Activated CD8-positive, alpha-beta memory T cell treated with anti-CD3 and anti-CD28 coated beads, Interleukin-2, amount 10 ng/mL, durations not matched to agents 7 days and 5 days (primary cell): ENCODE measurements at regions of chr18 and their contacts with region 1.

Region 1: GRCh38 chr18:2994603-2995432 is 18.1 kb downstream of the LPIN2 start:
- DNase-seq: peak; percentile 86
- ATAC-seq: peak; percentile 77
- H3K4me3 Mint-ChIP-seq: peak overlapping the region; percentile 9
- H3K27ac Mint-ChIP-seq: peak overlapping the region; percentile 79
- H3K4me1 Mint-ChIP-seq: peaks cover 78% of the 10 kb centered on the region
- H3K27me3 Mint-ChIP-seq: no peaks in the 10 kb centered on the region

Region 2: GRCh38 chr18:2948038-2948437 is 46.8 kb before region 1 on chr18:
- CTCF ChIA-PET with region 1: interaction called, 13 read pairs
- DNase-seq: no peak
- ATAC-seq: no peak
- H3K4me3 Mint-ChIP-seq: no peak overlapping the region
- H3K27ac Mint-ChIP-seq: no peak overlapping the region
- H3K4me1 Mint-ChIP-seq: peaks cover 42% of the 10 kb centered on the region
- H3K27me3 Mint-ChIP-seq: no peaks in the 10 kb centered on the region

Region 3: GRCh38 chr18:2971741-2972552 is 22.9 kb before region 1 on chr18:
- CTCF ChIA-PET with region 1: interaction called, 23 read pairs
- DNase-seq: peak; percentile 91
- ATAC-seq: peak; percentile 77
- H3K4me3 Mint-ChIP-seq: peak overlapping the region; percentile 77
- H3K27ac Mint-ChIP-seq: peak overlapping the region; percentile 98
- H3K4me1 Mint-ChIP-seq: peaks cover 92% of the 10 kb centered on the region
- H3K27me3 Mint-ChIP-seq: no peaks in the 10 kb centered on the region

Region 4: DNA sequence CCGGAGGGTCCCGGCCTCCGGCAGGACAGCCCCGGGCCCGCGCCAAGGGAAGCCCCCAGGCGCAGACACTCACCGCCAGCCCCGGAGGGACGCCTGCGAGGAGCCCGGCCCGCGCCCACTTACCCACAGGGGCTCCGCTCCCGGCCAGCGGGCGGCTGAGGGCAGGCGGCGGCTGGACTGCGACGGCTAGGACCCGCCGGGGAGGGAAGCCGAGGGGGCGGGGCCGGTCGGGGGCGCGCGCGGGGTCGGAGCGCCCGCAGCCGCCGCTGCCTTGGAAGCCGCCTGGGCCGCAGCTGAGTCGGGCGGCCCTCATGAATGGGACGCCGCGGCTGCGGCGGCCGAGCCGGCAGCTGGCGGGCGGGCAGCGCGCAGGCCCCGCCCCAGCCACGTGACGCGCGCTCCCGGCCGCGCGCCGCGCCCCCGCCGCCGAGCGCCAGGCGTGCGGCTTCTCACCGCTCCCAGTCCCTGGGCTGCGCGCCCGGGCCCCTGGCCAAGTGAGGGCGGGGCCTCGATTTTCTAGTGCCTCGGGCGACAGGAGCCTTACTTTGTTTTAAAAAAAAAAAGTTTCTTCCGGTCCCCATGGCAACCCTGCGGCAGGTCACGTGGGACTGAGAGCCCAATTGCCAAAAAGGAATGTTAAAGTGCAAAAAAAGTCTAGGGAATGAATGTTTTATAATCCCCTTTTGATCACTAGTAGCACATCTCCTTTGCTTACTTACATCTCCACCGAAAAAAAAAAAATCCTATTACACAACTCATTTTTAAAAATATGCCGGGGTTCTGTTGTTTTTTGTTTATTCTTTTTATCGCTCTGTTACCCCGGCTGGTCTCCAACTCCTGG is 18.4 kb after region 1 on chr18 and contains the start of gene LPIN2:
- CTCF ChIA-PET with region 1: interaction called, 12 read pairs
- DNase-seq: peak; percentile 98
- ATAC-seq: peak; percentile 94
- H3K4me3 Mint-ChIP-seq: peak within 1 kb of the TSS; percentile 88
- H3K27ac Mint-ChIP-seq: peak within 1 kb of the TSS; percentile 90
- H3K4me1 Mint-ChIP-seq: peaks cover 59% of the 10 kb centered on the region
- H3K27me3 Mint-ChIP-seq: no peaks in the 10 kb centered on the region
- total RNA-seq, gene LPIN2: 77.6 to 78.4 TPM

Region 5: GRCh38 chr18:3074087-3074486 is 79.3 kb after region 1 on chr18:
- CTCF ChIA-PET with region 1: interaction called, 10 read pairs
- DNase-seq: peak; percentile 37
- ATAC-seq: no peak
- H3K4me3 Mint-ChIP-seq: no peak overlapping the region
- H3K27ac Mint-ChIP-seq: no peak overlapping the region
- H3K4me1 Mint-ChIP-seq: peaks cover 19% of the 10 kb centered on the region
- H3K27me3 Mint-ChIP-seq: no peaks in the 10 kb centered on the region

Region 6: GRCh38 chr18:3151399-3152264 is 156.8 kb after region 1 on chr18:
- CTCF ChIA-PET with region 1: interaction called, 29 read pairs
- DNase-seq: no peak
- ATAC-seq: no peak
- H3K4me3 Mint-ChIP-seq: no peak overlapping the region
- H3K27ac Mint-ChIP-seq: no peak overlapping the region
- H3K4me1 Mint-ChIP-seq: peaks cover 1% of the 10 kb centered on the region
- H3K27me3 Mint-ChIP-seq: no peaks in the 10 kb centered on the region